Psoas muscle (tissue), 8 donors: ENCODE measurements at regions of chr19 and their contacts with region 1.

Region 1: DNA sequence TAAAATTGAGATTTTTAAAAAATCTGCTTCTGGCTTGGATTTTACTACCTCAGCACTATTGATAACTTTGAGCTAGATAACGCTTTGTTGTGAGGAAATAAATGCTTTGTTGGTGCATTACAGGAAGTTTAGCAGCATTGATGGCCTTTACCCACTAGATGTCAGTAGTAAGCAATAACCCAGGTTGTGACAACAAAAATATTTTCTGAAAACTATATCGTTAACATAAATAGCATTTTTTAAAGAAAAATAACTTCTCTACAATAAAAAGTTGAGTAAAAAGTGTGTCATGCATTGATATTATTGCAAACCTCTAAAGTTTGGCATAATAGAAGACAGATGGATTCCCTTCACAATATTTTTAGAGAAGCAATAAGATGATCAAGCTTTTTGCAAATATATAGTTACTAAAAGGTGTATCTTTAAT is 1246.5 kb downstream of the UQCRFS1 start:
- DNase-seq: no peak
- ATAC-seq: no peak
- H3K4me3 ChIP-seq: no peak overlapping the region
- H3K27ac ChIP-seq: no peak overlapping the region
- H3K4me1 ChIP-seq: no peaks in the 10 kb centered on the region
- H3K27me3 ChIP-seq: no peaks in the 10 kb centered on the region
- CTCF ChIP-seq: peak; percentile 48

Region 2: DNA sequence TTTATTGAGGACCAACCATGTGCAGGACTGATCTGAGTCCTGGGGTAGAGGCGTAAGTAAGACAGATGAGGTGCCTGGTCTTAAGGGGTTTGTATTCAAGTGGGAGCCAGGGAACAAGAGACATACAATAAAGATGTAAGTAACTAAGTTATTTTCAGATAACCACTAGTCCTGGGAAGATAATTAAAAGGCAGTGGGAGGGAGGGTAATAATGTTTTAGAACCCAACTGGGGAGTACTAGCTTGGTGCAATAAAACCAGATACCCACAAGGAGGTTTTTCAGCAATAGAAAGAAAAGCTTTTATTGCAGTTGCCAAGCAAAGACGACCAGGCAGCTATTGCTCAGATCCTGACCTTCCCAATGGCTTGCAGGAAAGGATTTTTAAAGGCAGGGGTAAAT is 352.8 kb after region 1 on chr19:
- intact Hi-C with region 1: loop called in 1 of 2 experiments (anchors 2 kb)
- DNase-seq: no peak
- ATAC-seq: no peak
- H3K4me3 ChIP-seq: no peak overlapping the region
- H3K27ac ChIP-seq: no peak overlapping the region
- H3K4me1 ChIP-seq: no peaks in the 10 kb centered on the region
- H3K27me3 ChIP-seq: peaks cover 0 to 5% (median 0%) of the 10 kb centered on the region in 3 donors
- CTCF ChIP-seq: no peak

Region 3: DNA sequence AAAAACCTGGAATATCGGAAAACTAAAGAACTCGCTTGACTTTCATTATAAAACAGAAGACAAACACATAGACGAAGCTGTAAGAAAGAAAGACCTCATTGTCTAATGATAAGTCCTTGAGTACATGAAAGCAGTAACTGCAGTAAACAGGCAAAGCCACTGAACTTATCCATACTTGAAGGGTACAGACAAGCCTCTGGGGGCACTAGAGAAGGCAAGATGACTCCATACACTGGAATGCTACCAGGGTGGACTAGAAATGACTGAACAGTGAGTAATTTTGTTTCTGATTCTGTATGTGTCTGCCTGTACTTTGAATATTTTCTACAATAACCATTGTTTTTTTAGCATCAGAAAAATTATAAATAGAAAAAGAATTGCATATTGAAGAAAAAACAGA is 738.6 kb after region 1 on chr19:
- intact Hi-C with region 1: loop called in 1 of 2 experiments (anchors 5 kb)
- DNase-seq: no peak
- ATAC-seq: no peak
- H3K4me3 ChIP-seq: no peak overlapping the region
- H3K27ac ChIP-seq: no peak overlapping the region
- H3K4me1 ChIP-seq: no peaks in the 10 kb centered on the region
- H3K27me3 ChIP-seq: no peaks in the 10 kb centered on the region
- CTCF ChIP-seq: no peak